Body of pancreas (tissue), 4 donors: ENCODE measurements at regions of chr11 and their contacts with region 1.

Region 1: DNA sequence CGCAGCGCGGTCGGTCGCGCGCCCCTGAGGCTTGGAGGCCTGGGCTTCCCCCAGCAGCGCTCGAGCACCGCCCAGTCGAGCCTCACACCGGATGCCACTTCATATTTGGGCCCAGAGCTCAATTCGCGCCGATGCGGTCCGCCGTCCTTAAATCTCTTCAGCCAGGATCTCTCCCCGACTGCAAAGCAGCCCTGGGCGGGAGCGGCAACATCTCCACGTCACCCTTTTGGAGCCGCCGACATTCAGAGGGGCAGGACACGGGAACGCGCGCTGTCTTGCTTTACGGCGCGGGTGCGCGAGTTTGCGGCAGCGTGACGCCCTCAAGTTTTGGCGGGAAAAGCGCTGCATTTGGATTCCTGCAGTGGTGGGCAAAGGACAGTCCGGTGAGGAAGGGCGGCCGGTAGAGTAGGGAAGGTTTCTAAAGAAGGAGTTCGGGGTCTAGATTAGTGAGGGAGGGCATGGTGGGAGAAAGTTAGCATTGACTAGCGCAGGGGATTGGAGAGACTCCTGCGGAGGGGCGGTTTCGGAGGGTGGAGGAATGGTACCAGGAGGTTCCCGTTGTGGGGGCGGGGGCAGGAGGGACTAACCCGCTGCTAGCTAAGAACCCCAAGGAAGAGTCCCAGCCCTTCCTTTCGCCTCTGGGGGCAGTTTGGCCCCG is 796 bp downstream of the CHEK1 start:
- DNase-seq: peak; percentile 85 to 88 (median 87)
- ATAC-seq: peak; percentile 93
- H3K4me3 ChIP-seq: peak overlapping the region; percentile 11 to 53
- H3K27ac ChIP-seq: peak overlapping the region; percentile 92 to 99 (median 96)
- H3K4me1 ChIP-seq: peaks cover 16% of the 10 kb centered on the region
- H3K27me3 ChIP-seq: no peaks in the 10 kb centered on the region
- CTCF ChIP-seq: peak in 1 of 7 experiments; percentile 11
- POLR2A ChIP-seq: peak; percentile 85 to 94 (median 90)

Region 2: DNA sequence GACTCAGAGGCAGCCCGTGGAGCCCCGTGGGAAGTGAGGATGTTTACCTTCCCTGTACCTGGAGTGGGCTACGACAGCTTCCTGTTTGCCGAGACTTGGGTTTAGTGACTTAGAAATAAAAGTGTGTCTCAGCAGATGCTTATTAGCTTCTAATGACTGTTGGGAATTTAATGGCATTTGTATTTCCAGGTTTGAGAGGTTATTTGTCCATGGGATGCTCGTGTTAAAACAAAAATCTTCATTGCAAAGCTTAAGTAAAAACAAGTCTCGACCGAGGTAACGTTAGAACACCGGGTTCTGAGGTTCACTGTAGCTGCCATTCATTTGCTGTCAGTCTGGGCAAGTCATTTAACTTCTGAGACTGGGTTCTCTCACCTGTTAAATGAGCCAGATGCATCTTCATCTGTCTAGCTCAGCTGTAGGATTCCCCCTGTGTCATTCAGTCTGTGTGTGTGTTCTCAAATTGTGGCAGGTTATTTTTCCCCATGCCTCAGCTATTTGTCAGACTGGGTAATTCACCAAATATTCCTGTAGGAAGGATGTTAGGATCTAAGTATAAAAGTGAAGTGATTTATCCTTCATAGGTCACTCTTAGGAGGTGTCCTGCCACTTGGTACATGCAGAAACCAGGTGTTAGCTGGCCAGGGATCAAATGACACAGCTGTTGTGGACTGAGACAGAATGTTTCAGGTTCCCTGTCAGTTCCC is 55.7 kb before region 1 on chr11:
- intact Hi-C with region 1: loop called (anchors 10 kb)
- DNase-seq: peak; percentile 65 to 85 (median 76)
- ATAC-seq: peak; percentile 30
- H3K4me3 ChIP-seq: peak overlapping the region; percentile 63 to 70
- H3K27ac ChIP-seq: peak overlapping the region; percentile 83 to 89 (median 86)
- H3K4me1 ChIP-seq: peaks cover 27% of the 10 kb centered on the region
- H3K27me3 ChIP-seq: no peaks in the 10 kb centered on the region
- CTCF ChIP-seq: no peak
- POLR2A ChIP-seq: no peak

Region 3: DNA sequence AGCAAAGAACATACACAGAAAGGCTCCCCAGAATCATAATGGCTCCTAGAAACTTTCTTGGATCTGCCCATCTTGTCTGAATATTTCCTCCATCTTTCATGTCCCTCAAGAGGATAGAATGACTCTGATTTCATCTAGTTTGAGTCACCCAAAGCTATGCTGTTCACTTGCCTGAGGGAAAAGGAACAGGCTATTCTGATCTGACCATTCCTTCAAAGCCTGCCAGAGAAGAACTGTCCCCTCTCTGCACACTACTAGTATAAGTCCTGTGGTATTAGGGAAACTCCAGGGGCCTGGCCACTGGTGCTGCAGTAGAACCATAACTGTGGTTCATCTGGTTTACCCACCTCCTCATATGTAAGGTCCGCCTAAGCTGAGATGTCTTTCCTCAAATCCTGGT is 117.9 kb after region 1 on chr11:
- intact Hi-C with region 1: no loop called
- DNase-seq: no peak
- ATAC-seq: no peak
- H3K4me3 ChIP-seq: no peak overlapping the region
- H3K27ac ChIP-seq: no peak overlapping the region
- H3K4me1 ChIP-seq: no peaks in the 10 kb centered on the region
- H3K27me3 ChIP-seq: no peaks in the 10 kb centered on the region
- CTCF ChIP-seq: no peak
- POLR2A ChIP-seq: no peak

Region 4: DNA sequence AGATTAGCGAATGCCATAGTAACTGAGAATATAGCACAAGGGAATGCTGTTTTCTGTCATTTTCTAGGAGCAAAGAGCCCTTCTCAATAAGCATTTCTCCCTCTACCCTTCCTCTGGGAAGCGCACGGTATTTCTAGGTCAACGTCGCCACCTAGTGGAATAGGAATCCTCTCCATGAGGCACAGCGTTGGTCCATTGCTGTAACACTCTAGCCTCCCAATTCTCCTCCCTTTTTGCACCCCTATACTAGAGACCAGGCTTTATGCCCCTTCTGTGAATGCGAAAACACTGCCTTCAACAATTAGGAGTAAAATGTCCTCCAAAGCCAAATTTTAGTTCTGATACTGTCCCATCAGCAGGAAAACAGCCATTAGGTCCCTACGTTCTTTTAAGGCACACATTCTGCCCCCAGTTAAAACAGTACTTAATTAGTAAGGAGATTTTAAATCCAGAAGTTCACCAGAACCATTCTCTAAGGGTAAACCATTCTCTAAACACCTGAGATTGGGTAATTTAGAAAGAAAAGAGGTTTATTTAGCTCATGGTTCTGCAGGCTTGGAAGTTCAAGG is 248.9 kb after region 1 on chr11:
- intact Hi-C with region 1: no loop called
- DNase-seq: peak; percentile 55 to 67 (median 62)
- ATAC-seq: peak; percentile 88
- H3K4me3 ChIP-seq: no peak overlapping the region
- H3K27ac ChIP-seq: no peak overlapping the region
- H3K4me1 ChIP-seq: no peaks in the 10 kb centered on the region
- H3K27me3 ChIP-seq: no peaks in the 10 kb centered on the region
- CTCF ChIP-seq: peak; percentile 42 to 81 (median 70)
- POLR2A ChIP-seq: no peak